Caco-2 (cell line): ENCODE measurements at regions of chr5 and their contacts with region 1.

Region 1: GRCh38 chr5:97998941-97999340 is 774.5 kb upstream of the RGMB start:
- DNase-seq: no peak
- H3K4me3 ChIP-seq: no peak overlapping the region
- H3K4me3 Mint-ChIP-seq: no peak overlapping the region
- H3K27ac Mint-ChIP-seq: no peak overlapping the region
- H3K4me1 ChIP-seq: peaks cover 20% of the 10 kb centered on the region; the same call in 1 of the 2 replicates
- H3K4me1 Mint-ChIP-seq: peaks cover 16% of the 10 kb centered on the region
- H3K27me3 ChIP-seq: no peaks in the 10 kb centered on the region
- H3K27me3 Mint-ChIP-seq: no peaks in the 10 kb centered on the region
- CTCF ChIP-seq: no peak

Region 2: DNA sequence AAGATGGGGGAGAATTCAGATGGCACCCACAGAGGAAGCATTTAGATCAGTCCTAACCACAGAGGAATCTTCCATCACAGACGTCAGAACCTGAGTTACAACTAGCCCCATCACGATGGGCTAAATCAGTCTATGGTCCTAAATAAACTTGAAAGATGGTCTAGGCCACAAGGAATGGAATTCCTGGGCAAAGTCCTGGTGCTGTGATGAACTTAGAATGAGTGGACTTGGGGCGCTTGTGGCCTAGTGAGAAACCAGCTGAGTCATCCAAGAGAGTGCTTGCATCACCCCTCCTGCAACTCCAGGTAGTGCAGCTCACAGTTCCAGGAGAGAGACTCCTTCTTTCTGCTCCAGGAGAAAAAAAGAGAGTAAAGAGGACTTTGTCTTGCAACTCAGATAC is 51.6 kb after region 1 on chr5:
- CTCF ChIA-PET with region 1: no interaction called
- POLR2A ChIA-PET with region 1: no interaction called
- intact Hi-C with region 1: loop called (anchors 1 kb)
- DNase-seq: peak in 1 of 2 experiments; percentile 13
- H3K4me3 ChIP-seq: no peak overlapping the region
- H3K4me3 Mint-ChIP-seq: no peak overlapping the region
- H3K27ac Mint-ChIP-seq: no peak overlapping the region
- H3K4me1 ChIP-seq: peaks cover 29% of the 10 kb centered on the region
- H3K4me1 Mint-ChIP-seq: peaks cover 8% of the 10 kb centered on the region
- H3K27me3 ChIP-seq: no peaks in the 10 kb centered on the region
- H3K27me3 Mint-ChIP-seq: no peaks in the 10 kb centered on the region
- CTCF ChIP-seq: no peak

Region 3: GRCh38 chr5:98309785-98310598 is 311.1 kb after region 1 on chr5:
- CTCF ChIA-PET with region 1: no interaction called
- POLR2A ChIA-PET with region 1: no interaction called
- intact Hi-C with region 1: no loop called
- DNase-seq: no peak
- H3K4me3 ChIP-seq: no peak overlapping the region
- H3K4me3 Mint-ChIP-seq: no peak overlapping the region
- H3K27ac Mint-ChIP-seq: no peak overlapping the region
- H3K4me1 ChIP-seq: no peaks in the 10 kb centered on the region
- H3K4me1 Mint-ChIP-seq: no peaks in the 10 kb centered on the region
- H3K27me3 ChIP-seq: no peaks in the 10 kb centered on the region
- H3K27me3 Mint-ChIP-seq: no peaks in the 10 kb centered on the region
- CTCF ChIP-seq: no peak